Ovary (tissue), 10 donors: ENCODE measurements at regions of chr11 and their contacts with region 1.

Region 1: DNA sequence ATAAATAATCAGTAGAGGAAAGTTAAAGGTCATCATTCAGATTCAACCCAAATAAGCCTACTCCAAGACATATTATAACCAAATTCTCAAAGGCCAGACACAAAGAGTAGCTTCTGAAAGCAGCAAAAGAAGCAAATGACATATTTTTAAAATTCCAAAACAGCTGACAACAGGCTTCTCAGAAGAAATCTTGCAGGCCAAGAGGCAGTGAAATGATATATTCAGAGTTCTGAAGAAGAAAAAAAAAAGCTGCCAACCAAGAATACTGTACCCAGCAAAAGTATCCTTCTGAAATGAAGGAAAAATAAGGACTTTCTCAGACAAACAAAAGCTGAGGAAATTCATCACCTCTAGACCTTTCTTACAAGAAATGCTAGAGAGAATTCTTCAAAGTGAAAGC is 787.1 kb upstream of the TENM4 start:
- DNase-seq: no peak
- H3K4me3 ChIP-seq: no peak overlapping the region
- H3K27ac ChIP-seq: no peak overlapping the region
- H3K4me1 ChIP-seq: no peaks in the 10 kb centered on the region
- H3K27me3 ChIP-seq: no peaks in the 10 kb centered on the region
- CTCF ChIP-seq: no peak
- EP300 ChIP-seq: no peak
- POLR2A ChIP-seq: no peak

Region 2: GRCh38 chr11:80188076-80188627 is 39.8 kb before region 1 on chr11:
- intact Hi-C with region 1: loop called in 1 of 4 experiments (anchors 1 kb)
- DNase-seq: no peak
- H3K4me3 ChIP-seq: no peak overlapping the region
- H3K27ac ChIP-seq: no peak overlapping the region
- H3K4me1 ChIP-seq: no peaks in the 10 kb centered on the region
- H3K27me3 ChIP-seq: no peaks in the 10 kb centered on the region
- CTCF ChIP-seq: no peak
- EP300 ChIP-seq: no peak
- POLR2A ChIP-seq: no peak

Region 3: GRCh38 chr11:80240245-80240644 is 12.3 kb after region 1 on chr11:
- intact Hi-C with region 1: loop called in 1 of 4 experiments (anchors 1 kb)
- DNase-seq: no peak
- H3K4me3 ChIP-seq: no peak overlapping the region
- H3K27ac ChIP-seq: no peak overlapping the region
- H3K4me1 ChIP-seq: peaks cover 3% of the 10 kb centered on the region
- H3K27me3 ChIP-seq: no peaks in the 10 kb centered on the region
- CTCF ChIP-seq: no peak
- EP300 ChIP-seq: no peak
- POLR2A ChIP-seq: no peak